ENCODE measurements at regions of chr7 and their contacts with region 1.

Region 1: DNA sequence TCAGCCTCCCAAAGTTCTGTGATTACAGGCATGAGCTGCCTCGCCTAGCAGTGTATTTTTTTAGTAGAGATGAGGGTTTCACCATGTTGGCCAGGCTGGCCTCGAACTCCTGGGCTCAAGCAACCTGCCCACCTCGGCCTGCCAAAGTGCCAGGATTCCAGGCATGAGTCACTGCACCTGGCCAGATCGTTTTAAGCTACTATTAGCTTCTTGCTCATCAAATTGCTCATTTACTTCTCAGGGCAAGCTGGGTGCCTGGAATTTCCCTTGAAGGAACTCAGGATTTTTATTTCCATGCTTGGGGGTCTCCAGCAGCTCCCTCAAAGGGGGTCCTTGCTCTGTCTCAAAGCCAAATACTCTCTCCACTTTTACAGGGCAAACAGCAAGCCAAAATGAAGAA is 798.0 kb upstream of the AUTS2 start:
- DNase-seq: peak; percentile 6 to 73
- H3K4me3 ChIP-seq: no peak overlapping the region
- H3K27ac ChIP-seq: peak overlapping the region; percentile 79
- H3K4me1 ChIP-seq: peaks cover 27% of the 10 kb centered on the region
- H3K27me3 ChIP-seq: no peaks in the 10 kb centered on the region
- CTCF ChIP-seq: no peak

Region 2: DNA sequence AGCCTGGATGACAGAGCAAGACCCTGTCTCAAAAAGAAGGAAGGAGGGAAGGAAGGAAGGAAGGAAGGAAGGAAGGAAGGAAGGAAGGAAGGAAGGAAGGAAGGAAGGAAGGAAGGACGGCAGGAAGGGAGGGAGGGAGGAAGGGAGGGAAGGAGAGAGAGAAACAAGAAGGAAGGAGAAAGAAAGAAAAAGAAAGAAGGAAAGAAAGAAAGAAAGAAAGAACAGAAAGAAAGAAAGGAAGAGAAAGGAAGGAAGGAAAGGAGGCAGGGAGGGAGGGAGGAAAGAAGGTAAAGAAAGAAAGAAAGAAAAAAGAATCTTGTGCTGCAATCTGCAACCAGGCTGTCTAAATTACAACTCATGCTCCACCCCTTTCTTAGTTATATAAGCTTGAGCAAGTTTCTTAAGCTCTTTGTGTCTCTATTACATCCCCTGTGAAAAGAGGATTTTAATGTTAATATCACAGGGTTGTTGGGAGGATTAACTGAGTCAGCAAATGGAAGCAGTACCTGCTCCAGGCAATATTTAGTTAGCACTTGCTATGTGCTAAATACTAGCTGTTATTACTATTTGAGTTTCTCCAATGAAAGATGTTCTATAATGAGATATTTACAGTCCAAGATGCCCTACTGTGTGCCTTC is 120.0 kb before region 1 on chr7:
- CTCF ChIA-PET with region 1: no interaction called
- POLR2A ChIA-PET with region 1: no interaction called
- intact Hi-C with region 1: no loop called
- DNase-seq: no peak
- H3K4me3 ChIP-seq: no peak overlapping the region
- H3K27ac ChIP-seq: no peak overlapping the region
- H3K4me1 ChIP-seq: no peaks in the 10 kb centered on the region
- H3K27me3 ChIP-seq: no peaks in the 10 kb centered on the region
- CTCF ChIP-seq: no peak

Region 3: DNA sequence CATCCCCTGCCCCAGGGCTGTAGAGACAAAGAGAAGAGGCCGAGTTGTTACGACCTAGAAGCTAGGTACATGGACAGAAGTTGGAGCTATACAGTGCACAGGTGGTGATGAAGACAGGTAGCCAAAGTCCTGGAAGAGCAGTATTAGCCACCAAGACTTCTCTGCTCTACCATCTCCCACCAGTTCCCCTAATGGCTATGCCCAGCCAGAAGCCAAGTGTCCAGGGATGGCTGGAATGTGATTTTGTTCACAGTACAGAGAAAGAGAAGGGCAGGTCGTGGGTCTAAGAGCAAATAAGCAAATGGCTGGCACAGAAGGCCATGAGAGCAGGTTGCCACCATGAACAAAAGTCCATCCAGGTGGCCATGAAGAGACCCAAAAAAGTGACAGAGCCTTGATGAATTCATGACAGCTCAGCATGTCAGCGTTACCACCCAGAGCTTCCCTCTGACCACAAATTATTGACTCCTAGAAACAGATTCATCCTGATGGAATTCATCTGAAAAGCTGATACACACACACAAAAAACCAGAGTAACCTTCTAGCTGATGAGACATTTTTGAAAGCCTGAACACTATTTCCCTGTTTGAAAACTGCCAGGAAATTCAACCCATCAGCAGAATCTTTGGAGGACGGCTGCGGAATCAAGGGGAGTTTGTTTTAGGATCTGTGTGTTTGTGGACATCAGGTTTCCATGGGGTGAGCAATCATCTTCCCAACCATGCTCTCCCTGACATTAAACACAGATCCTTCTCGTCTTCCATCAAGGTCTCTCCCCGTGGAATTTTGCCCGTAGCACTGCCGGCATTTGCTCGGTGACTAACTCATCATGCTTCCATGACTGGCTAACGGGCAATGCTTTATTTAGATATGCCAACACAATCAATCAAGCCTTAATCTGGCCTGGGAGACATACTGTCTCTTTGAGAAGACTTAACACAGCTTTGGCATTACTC is 108.8 kb before region 1 on chr7:
- CTCF ChIA-PET with region 1: no interaction called
- POLR2A ChIA-PET with region 1: no interaction called
- intact Hi-C with region 1: loop called (anchors 5 kb)
- DNase-seq: peak; percentile 30 to 96
- H3K4me3 ChIP-seq: peak overlapping the region; percentile 32; the same call in 1 of the 2 replicates
- H3K27ac ChIP-seq: peak overlapping the region; percentile 97
- H3K4me1 ChIP-seq: peaks cover 55% of the 10 kb centered on the region
- H3K27me3 ChIP-seq: no peaks in the 10 kb centered on the region
- CTCF ChIP-seq: no peak

Region 4: DNA sequence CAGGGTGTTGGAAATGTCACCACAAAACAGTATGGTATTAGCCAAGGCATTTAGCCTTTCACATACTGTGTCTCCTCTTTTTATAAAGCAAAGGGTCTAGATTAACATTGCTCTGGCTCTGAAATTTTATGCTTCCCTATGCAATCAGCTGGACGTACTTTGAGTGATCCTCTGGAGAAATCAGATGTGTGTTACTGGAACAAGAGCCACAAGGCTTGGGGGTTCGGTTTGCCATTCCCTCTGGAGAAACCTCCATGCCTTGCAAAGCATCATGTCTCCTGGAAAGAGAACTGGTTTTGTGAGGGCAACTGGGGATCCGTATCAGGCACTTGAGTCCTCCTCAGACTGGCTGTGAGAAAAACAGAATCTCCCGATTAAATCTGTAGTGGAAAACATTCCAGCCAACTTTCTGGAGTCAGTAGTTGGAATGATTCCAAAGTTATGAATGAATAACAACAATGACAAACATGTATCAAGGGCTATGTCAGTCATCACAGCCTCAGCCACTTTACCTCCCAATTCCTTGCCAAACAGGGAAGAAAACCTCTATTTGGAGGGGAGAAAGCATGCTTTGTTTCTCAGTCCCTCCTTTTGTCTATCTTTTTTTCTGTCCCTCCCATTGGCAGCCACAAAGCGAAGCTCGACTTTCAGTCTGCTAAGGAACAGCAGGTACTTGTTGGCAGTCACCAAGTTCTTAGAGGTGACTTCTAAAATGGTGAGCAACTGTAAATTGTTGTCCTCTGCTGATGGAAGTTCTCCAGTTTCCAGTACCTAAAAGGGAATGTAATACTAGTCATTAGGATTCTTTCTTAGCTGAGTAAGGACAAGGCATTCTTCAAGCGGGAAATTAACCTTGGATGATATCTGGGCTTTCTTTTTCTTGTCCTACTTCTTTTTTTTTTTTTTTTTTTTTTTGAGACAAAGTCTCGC is 66.8 kb before region 1 on chr7:
- CTCF ChIA-PET with region 1: no interaction called
- POLR2A ChIA-PET with region 1: no interaction called
- intact Hi-C with region 1: no loop called
- DNase-seq: peak in 1 of 2 experiments; percentile 46
- H3K4me3 ChIP-seq: no peak overlapping the region
- H3K27ac ChIP-seq: no peak overlapping the region
- H3K4me1 ChIP-seq: peaks cover 46% of the 10 kb centered on the region
- H3K27me3 ChIP-seq: 0 out of 2 replicates have a peak, but pooled peaks cover 4% of the 10 kb centered on the region
- CTCF ChIP-seq: no peak

Region 5: GRCh38 chr7:68840991-68841390 is 40.7 kb after region 1 on chr7:
- CTCF ChIA-PET with region 1: interaction called, 14 read pairs
- POLR2A ChIA-PET with region 1: no interaction called
- intact Hi-C with region 1: no loop called
- DNase-seq: no peak
- H3K4me3 ChIP-seq: no peak overlapping the region
- H3K27ac ChIP-seq: no peak overlapping the region
- H3K4me1 ChIP-seq: no peaks in the 10 kb centered on the region
- H3K27me3 ChIP-seq: no peaks in the 10 kb centered on the region
- CTCF ChIP-seq: no peak